Esophagus muscularis mucosa (tissue), 4 donors: ENCODE measurements at regions of chr22 and their contacts with region 1.

Region 1: GRCh38 chr22:24521791-24522245 is 26.7 kb downstream of the UPB1 start:
- DNase-seq: no peak
- H3K4me3 ChIP-seq: no peak overlapping the region
- H3K27ac ChIP-seq: no peak overlapping the region
- H3K4me1 ChIP-seq: peaks cover 15 to 38% (median 26%) of the 10 kb centered on the region in 4 donors
- H3K27me3 ChIP-seq: no peaks in the 10 kb centered on the region
- CTCF ChIP-seq: peak; percentile 21 to 39 (median 25)
- EP300 ChIP-seq: no peak
- POLR2A ChIP-seq: no peak

Region 2: DNA sequence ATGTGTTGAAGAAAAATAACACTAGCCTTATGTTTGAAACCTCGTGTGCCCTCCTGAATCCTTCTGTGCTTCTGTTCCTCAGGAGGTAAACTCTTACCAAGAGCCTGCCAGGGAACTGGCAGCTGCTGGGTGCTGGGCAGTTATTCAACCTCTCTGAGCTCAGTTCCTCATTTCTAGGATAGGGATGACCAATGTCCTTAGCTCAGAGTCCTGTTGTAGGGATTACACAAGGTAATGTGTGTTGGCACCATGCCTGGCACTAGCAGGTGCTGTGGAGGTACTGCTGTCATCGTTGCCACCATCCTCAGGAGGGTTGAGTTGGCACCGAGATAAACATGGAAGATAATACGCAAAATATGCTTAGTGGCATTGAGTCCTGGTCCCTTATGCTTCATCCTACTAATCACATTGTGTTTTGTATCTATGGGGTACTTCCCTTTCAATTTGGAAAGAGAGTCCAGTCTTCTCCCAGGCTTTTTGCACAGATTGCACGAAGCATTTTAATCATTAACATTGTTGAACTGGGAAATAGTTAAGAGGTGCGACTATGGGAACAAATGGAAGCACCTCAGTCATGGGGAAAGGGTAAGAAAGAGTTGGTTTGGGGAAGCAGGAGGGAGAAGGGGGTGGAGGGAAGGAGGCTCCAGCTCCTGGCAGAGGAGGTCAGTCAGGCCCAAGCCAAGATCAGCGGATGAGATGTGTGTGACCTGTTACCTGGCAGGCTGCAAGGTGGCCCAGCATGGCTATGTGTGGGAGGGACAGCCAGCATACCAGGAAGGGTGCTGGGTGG is 454.0 kb before region 1 on chr22:
- intact Hi-C with region 1: no loop called
- DNase-seq: no peak
- H3K4me3 ChIP-seq: no peak overlapping the region
- H3K27ac ChIP-seq: no peak overlapping the region
- H3K4me1 ChIP-seq: peaks cover 3 to 9% (median 5%) of the 10 kb centered on the region in 4 donors
- H3K27me3 ChIP-seq: no peaks in the 10 kb centered on the region
- CTCF ChIP-seq: no peak
- EP300 ChIP-seq: no peak
- POLR2A ChIP-seq: no peak

Region 3: GRCh38 chr22:24322522-24322921 is 199.3 kb before region 1 on chr22:
- intact Hi-C with region 1: loop called (anchors 5 kb)
- DNase-seq: no peak
- H3K4me3 ChIP-seq: no peak overlapping the region
- H3K27ac ChIP-seq: no peak overlapping the region
- H3K4me1 ChIP-seq: peaks cover 19 to 35% (median 26%) of the 10 kb centered on the region in 4 donors
- H3K27me3 ChIP-seq: no peaks in the 10 kb centered on the region
- CTCF ChIP-seq: no peak
- EP300 ChIP-seq: no peak
- POLR2A ChIP-seq: no peak

Region 4: DNA sequence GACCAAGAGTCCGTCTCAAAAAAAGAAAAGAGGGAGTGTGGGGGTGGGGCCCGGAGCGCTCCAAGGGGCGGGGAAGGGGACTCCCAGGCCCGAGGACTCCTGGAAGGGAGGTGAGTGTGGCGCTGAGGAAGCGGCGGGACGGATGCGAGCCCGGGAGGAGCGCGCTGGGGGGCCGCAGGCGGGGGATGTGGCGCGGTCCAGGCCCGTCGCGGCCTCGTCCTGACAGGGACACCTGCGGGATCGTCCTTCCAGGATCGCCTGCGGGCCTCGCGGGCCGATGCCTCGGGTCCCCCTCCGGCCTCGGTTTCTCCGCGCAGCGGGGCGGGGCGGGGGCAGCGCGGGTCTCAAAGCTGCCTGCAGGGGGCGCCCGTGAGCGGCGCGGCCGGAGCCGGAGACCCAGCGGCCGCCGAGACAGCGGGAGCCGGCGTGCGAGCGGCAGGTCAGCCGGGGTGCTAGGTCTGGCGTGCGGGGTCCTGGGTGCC is 98.3 kb before region 1 on chr22:
- intact Hi-C with region 1: loop called (anchors 5 kb)
- DNase-seq: no peak
- H3K4me3 ChIP-seq: peak overlapping the region; percentile 55 to 69 (median 62)
- H3K27ac ChIP-seq: peak overlapping the region; percentile 7 to 48 (median 24)
- H3K4me1 ChIP-seq: peaks cover 37 to 54% (median 44%) of the 10 kb centered on the region in 4 donors
- H3K27me3 ChIP-seq: peaks cover 0 to 34% (median 7%) of the 10 kb centered on the region in 4 donors
- CTCF ChIP-seq: peak in 2 of 3 experiments; percentile 88 to 91
- EP300 ChIP-seq: no peak
- POLR2A ChIP-seq: no peak